Caco-2 (cell line): ENCODE measurements at regions of chr16 and their contacts with region 1.

Region 1: GRCh38 chr16:4548124-4548523 is 8.0 kb upstream of the C16orf96 start:
- DNase-seq: no peak
- H3K4me3 ChIP-seq: no peak overlapping the region
- H3K4me3 Mint-ChIP-seq: no peak overlapping the region
- H3K27ac Mint-ChIP-seq: no peak overlapping the region
- H3K4me1 ChIP-seq: no peaks in the 10 kb centered on the region
- H3K4me1 Mint-ChIP-seq: no peaks in the 10 kb centered on the region
- H3K27me3 ChIP-seq: no peaks in the 10 kb centered on the region
- H3K27me3 Mint-ChIP-seq: peaks cover 2% of the 10 kb centered on the region
- CTCF ChIP-seq: no peak

Region 2: DNA sequence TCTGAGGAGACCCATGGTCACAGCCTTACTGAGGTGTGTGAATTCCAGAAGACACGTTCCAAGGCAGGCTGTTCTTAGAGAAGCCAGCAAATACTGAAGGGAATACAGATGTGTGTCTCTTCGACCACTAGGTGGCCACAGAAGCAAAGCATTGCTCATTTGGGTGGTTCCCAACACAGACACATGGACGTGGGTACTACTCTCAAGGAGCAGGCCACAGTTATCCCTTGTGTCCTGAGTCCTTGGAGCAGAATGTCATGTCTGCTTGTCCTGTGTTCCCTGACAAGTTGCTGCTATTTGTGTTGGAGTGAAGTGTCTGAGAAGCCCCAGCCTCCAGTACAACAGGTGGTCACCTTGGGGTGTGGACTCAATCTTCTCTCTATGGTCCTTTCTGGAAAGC is 41.7 kb before region 1 on chr16:
- CTCF ChIA-PET with region 1: interaction called, 10 read pairs
- POLR2A ChIA-PET with region 1: no interaction called
- intact Hi-C with region 1: loop called (anchors 1 kb)
- DNase-seq: peak; percentile 58
- H3K4me3 ChIP-seq: no peak overlapping the region
- H3K4me3 Mint-ChIP-seq: no peak overlapping the region
- H3K27ac Mint-ChIP-seq: no peak overlapping the region
- H3K4me1 ChIP-seq: no peaks in the 10 kb centered on the region
- H3K4me1 Mint-ChIP-seq: peaks cover 1% of the 10 kb centered on the region
- H3K27me3 ChIP-seq: no peaks in the 10 kb centered on the region
- H3K27me3 Mint-ChIP-seq: no peaks in the 10 kb centered on the region
- CTCF ChIP-seq: peak; percentile 77 to 82

Region 3: DNA sequence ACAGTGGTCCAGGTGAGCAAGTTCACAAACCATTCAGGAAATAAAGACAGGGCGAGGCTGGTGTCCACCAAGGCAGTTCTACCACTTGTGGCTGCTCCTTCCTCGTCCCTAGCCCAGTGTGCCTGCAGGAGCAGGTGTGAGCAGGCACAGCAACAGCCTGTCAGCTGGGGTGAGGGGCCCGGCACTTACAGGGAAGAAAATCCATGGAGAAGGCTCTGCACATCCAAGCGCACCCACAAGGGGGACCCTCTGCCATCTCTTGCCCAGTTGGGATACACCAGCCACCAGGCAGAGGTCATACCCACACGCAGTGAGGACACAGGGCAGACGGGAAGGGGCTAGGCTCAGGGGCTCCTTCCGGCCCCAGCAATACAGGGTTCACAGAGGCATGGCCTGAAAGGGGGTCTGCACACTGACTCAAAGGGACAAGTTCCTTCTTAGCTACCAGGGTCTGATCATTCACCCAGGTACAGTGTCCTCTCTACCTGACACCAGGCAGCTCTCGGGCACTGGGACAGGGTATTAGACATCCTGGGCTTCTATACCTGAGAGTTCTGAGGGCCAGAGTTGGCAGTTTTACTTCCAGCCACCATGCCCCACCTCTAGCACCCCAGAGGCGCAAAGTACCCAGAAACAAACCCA is 36.6 kb before region 1 on chr16:
- CTCF ChIA-PET with region 1: interaction called, 10 read pairs
- POLR2A ChIA-PET with region 1: no interaction called
- intact Hi-C with region 1: loop called (anchors 1 kb)
- DNase-seq: peak; percentile 64 to 76
- H3K4me3 ChIP-seq: no peak overlapping the region
- H3K4me3 Mint-ChIP-seq: no peak overlapping the region
- H3K27ac Mint-ChIP-seq: no peak overlapping the region
- H3K4me1 ChIP-seq: no peaks in the 10 kb centered on the region
- H3K4me1 Mint-ChIP-seq: no peaks in the 10 kb centered on the region
- H3K27me3 ChIP-seq: no peaks in the 10 kb centered on the region
- H3K27me3 Mint-ChIP-seq: no peaks in the 10 kb centered on the region
- CTCF ChIP-seq: peak; percentile 46 to 70

Region 4: DNA sequence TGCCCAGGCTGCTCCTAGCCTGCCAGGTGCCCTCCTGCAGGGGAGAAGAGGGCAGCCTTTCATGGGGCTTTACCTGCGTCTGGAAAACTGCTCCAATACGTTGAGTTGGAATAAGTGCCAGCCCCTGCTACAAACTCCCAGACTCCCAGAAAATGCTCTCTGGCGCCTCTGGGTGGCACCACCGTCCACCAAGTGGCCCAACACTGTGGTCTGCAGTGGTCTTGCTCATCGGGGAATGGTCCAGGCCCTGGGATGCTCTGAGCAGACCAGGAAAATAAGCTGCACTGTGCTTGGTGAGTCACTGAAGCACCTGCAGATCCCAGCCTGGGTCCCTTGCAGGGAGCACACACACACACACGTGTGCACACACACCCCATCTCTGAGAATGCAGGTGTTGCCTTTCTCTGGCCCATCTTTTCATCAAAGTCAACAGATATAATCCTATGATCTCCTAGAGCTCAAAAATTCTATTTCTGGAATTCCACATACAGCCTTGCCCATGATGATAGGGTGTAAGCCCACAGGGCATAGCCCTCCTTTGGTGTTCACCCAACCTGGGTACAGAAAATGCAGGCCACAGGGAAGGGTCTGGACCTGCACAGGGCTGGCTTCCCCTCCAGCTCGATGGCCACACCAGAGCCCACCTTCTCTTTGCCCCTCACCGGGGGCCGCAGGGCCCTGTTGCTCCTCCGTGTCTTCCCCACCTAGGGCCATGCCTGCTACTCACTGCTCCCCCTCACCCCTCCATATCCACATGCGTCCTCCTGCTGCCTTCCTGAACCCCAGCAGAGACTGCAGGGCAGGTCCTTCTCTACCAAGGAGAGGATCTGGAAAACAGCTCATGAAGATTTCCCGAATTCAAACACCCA is 30.1 kb before region 1 on chr16:
- CTCF ChIA-PET with region 1: interaction called, 9 read pairs
- POLR2A ChIA-PET with region 1: no interaction called
- intact Hi-C with region 1: loop called (anchors 1 kb)
- DNase-seq: peak in 1 of 2 experiments; percentile 52
- H3K4me3 ChIP-seq: no peak overlapping the region
- H3K4me3 Mint-ChIP-seq: no peak overlapping the region
- H3K27ac Mint-ChIP-seq: no peak overlapping the region
- H3K4me1 ChIP-seq: no peaks in the 10 kb centered on the region
- H3K4me1 Mint-ChIP-seq: no peaks in the 10 kb centered on the region
- H3K27me3 ChIP-seq: no peaks in the 10 kb centered on the region
- H3K27me3 Mint-ChIP-seq: no peaks in the 10 kb centered on the region
- CTCF ChIP-seq: peak; percentile 59 to 65